ENCODE measurements at regions of chr2 and their contacts with region 1.

Region 1: GRCh38 chr2:170928824-170929685 is at the start of gene GORASP2:
- DNase-seq: peak; percentile 99
- H3K4me3 Mint-ChIP-seq: peak within 1 kb of the TSS; percentile 97
- H3K27ac Mint-ChIP-seq: peak within 1 kb of the TSS; percentile 96
- H3K4me1 Mint-ChIP-seq: peaks cover 34% of the 10 kb centered on the region
- H3K27me3 Mint-ChIP-seq: no peaks in the 10 kb centered on the region
- total RNA-seq, gene GORASP2: 64.5 to 73.7 TPM

Region 2: GRCh38 chr2:170862286-170862902 is 66.7 kb before region 1 on chr2:
- CTCF ChIA-PET with region 1: no interaction called
- POLR2A ChIA-PET with region 1: no interaction called
- intact Hi-C with region 1: no loop called
- DNase-seq: no peak
- H3K4me3 Mint-ChIP-seq: no peak overlapping the region
- H3K27ac Mint-ChIP-seq: no peak overlapping the region
- H3K4me1 Mint-ChIP-seq: no peaks in the 10 kb centered on the region
- H3K27me3 Mint-ChIP-seq: no peaks in the 10 kb centered on the region

Region 3: DNA sequence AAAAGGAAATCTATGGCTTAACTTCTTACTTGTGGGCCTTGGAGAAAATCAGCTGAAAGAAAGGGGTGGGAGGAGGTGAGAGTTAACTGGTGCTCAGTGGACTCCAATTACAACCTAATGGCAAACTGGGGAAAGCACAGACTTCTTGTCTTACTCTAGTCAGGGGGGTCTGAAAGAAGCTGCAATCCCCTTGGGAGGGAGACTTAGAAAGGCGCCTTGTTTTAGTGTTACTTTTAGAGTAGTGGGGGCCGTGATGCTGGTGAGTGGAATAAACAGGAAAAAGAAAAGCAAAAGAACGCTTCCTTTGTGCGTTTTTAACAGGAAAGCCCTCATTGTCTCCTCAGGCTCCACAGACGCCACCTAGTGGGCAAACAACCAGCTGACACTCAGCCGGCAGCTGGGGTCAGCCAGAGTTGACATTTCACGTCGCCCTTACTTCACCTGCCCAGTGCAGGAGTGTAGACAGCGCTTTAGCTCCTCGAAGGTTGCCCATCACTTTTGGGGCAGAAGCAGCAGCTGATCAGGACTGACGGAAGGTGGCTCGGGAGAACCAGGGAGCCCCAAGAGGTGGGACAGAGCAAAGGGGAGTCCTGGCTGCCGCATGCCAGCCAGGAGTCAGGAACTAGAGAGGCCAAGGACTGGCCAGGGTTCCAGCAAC is 55.9 kb before region 1 on chr2:
- CTCF ChIA-PET with region 1: interaction called, 14 read pairs
- POLR2A ChIA-PET with region 1: no interaction called
- intact Hi-C with region 1: no loop called
- DNase-seq: peak; percentile 85
- H3K4me3 Mint-ChIP-seq: peak overlapping the region; percentile 44
- H3K27ac Mint-ChIP-seq: no peak overlapping the region
- H3K4me1 Mint-ChIP-seq: peaks cover 11% of the 10 kb centered on the region
- H3K27me3 Mint-ChIP-seq: no peaks in the 10 kb centered on the region

Region 4: GRCh38 chr2:170973492-170974303 is 44.6 kb after region 1 on chr2:
- CTCF ChIA-PET with region 1: interaction called, 12 read pairs
- POLR2A ChIA-PET with region 1: no interaction called
- intact Hi-C with region 1: loop called (anchors 1 kb)
- DNase-seq: peak; percentile 91
- H3K4me3 Mint-ChIP-seq: peak overlapping the region; percentile 72
- H3K27ac Mint-ChIP-seq: peak overlapping the region; percentile 42
- H3K4me1 Mint-ChIP-seq: peaks cover 14% of the 10 kb centered on the region
- H3K27me3 Mint-ChIP-seq: no peaks in the 10 kb centered on the region

Region 5: GRCh38 chr2:171244970-171245782 is 316.1 kb after region 1 on chr2:
- CTCF ChIA-PET with region 1: interaction called, 3 read pairs
- POLR2A ChIA-PET with region 1: no interaction called
- intact Hi-C with region 1: loop called (anchors 5 kb)
- DNase-seq: peak; percentile 13
- H3K4me3 Mint-ChIP-seq: no peak overlapping the region
- H3K27ac Mint-ChIP-seq: no peak overlapping the region
- H3K4me1 Mint-ChIP-seq: peaks cover 50% of the 10 kb centered on the region
- H3K27me3 Mint-ChIP-seq: no peaks in the 10 kb centered on the region

Region 6: GRCh38 chr2:171416009-171416926 is 487.2 kb after region 1 on chr2:
- CTCF ChIA-PET with region 1: interaction called, 13 read pairs
- POLR2A ChIA-PET with region 1: no interaction called
- intact Hi-C with region 1: loop called (anchors 1 kb)
- DNase-seq: peak; percentile 91
- H3K4me3 Mint-ChIP-seq: no peak overlapping the region
- H3K27ac Mint-ChIP-seq: peak overlapping the region; percentile 88
- H3K4me1 Mint-ChIP-seq: peaks cover 33% of the 10 kb centered on the region
- H3K27me3 Mint-ChIP-seq: no peaks in the 10 kb centered on the region

Region 7: DNA sequence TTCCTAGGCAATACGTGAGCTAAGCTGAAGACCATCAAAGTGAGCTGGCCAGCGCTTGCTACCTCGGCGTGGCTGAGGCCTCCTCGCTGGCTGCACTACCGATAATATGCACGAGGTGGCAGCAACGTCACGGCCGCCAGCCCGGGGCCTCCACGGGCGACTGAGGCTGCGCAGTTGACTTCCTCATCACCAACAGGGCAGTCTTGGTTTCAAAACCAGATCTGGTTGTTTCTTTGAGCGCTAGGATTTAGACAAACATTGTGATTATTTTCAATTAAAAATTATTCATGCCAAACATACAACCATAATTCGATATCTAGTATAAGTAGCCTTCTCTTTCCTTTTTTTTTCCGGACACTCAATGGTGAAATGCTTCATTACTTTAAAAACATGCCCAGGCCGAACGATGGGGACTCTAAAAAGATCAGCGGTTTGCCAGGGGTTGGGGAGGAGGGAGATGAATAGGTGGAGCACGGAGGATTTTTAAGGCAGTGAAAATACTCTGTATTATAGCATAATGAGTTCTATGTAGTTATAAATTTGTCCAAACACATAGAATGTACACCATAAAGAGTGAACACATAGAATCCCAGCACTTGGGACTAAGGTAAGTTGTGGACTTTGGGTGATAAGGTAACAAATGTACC is 645.2 kb after region 1 on chr2:
- CTCF ChIA-PET with region 1: interaction called, 5 read pairs
- POLR2A ChIA-PET with region 1: no interaction called
- intact Hi-C with region 1: loop called (anchors 1 kb)
- DNase-seq: peak; percentile 90
- H3K4me3 Mint-ChIP-seq: no peak overlapping the region
- H3K27ac Mint-ChIP-seq: no peak overlapping the region
- H3K4me1 Mint-ChIP-seq: peaks cover 7% of the 10 kb centered on the region
- H3K27me3 Mint-ChIP-seq: peaks cover 2% of the 10 kb centered on the region

Region 8: DNA sequence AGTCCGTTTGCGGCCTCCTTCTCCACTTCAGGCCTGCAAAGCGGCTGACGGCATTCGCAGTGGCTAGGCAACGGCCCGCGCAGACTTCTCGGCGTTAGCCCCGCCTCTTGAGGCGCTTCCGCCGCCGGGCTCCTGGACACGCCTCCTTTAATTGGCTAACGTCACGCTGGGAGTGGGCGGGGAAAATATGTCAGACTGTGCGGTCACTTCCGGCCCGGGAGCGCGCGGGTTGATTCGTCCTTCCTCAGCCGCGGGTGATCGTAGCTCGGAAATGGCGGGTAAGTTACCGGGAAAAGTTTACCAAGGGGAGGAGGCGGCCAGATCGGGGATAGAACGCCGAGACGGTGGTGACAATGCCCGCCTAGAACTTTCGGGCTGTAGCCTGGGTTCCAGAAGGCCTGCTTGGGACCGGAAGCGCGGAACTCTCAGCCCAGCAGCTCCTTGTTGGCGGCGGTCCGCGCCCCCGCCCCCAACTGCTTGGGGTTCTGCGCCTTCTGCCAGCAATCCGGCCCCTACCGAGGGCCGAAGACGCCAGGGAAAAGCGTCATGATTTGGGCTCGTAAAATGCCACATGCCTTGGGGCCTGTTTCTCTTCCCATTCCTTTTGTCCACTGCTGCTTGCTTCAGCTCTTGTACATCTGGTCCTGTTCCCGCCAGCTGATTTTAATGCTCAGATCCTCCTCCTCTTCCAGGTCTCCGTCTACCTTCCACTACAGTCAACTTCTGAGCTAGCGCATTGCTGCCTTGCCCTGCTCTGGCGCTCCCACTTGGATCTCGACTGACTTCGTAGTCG is 993.4 kb after region 1 on chr2 and contains the start of gene HAT1:
- CTCF ChIA-PET with region 1: interaction called, 3 read pairs
- POLR2A ChIA-PET with region 1: interaction called, 3 read pairs
- intact Hi-C with region 1: loop called (anchors 2 kb)
- DNase-seq: peak; percentile 99
- H3K4me3 Mint-ChIP-seq: peak within 1 kb of the TSS; percentile 97
- H3K27ac Mint-ChIP-seq: peak within 1 kb of the TSS; percentile 98
- H3K4me1 Mint-ChIP-seq: peaks cover 33% of the 10 kb centered on the region
- H3K27me3 Mint-ChIP-seq: no peaks in the 10 kb centered on the region
- total RNA-seq, gene HAT1: 86.2 to 90.8 TPM